Naive thymus-derived CD4-positive, alpha-beta T cell (primary cell): ENCODE measurements at regions of chr9 and their contacts with region 1.

Region 1: DNA sequence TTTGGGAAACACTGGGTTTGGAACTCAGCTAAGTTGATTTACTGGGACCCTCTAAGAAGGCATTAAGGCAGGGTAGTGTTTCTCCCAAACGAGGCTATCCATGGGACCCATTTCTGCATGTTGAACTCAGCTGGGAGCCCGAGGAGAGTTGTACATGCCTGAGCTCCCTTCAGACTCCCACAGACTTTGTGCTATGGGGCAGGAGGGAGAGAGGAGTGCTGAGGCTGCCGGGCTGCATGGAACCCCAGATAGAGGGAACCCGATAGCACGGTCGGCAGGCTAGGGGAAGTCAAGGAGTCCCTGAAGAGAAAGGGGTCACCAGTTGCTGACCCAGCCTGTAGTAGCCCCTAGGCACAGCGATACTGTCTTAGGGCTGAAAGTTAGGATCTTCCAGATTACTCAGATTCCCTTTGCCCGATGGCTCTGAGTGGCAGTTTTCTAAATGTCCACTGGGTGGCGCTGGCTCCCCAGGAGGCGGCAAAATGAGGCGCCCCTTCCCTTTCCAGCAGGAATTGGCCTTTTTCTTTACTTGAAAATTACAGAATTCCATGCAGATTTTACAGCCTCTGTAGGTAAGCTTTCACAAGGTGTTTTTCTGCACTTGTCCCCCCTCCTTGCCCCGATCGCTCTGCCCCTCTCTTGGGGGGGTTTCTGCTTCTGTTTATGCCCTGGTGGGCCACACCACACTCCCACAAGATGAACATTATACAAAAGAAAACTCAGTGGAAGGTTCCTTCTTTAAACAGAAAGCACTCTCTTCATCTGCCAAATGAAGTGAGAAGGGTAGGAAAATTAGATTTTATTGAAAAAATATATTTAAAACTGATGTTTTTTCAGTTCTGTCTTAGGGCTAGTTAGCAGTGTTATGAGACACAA is 17.8 kb downstream of the NANS start:
- DNase-seq: peak; percentile 46 to 78 (median 63)
- ATAC-seq: peak; percentile 47
- H3K4me3 ChIP-seq: no peak overlapping the region
- H3K4me3 Mint-ChIP-seq: peak overlapping the region; percentile 26 to 79 (median 64)
- H3K27ac ChIP-seq: peak overlapping the region; percentile 81
- H3K27ac Mint-ChIP-seq: peak overlapping the region; percentile 83 to 98 (median 94)
- H3K4me1 ChIP-seq: peaks cover 27 to 28% of the 10 kb centered on the region in 2 donors
- H3K4me1 Mint-ChIP-seq: peaks cover 0 to 55% (median 46%) of the 10 kb centered on the region in 7 donors
- H3K27me3 ChIP-seq: no peaks in the 10 kb centered on the region
- H3K27me3 Mint-ChIP-seq: no peaks in the 10 kb centered on the region

Region 2: DNA sequence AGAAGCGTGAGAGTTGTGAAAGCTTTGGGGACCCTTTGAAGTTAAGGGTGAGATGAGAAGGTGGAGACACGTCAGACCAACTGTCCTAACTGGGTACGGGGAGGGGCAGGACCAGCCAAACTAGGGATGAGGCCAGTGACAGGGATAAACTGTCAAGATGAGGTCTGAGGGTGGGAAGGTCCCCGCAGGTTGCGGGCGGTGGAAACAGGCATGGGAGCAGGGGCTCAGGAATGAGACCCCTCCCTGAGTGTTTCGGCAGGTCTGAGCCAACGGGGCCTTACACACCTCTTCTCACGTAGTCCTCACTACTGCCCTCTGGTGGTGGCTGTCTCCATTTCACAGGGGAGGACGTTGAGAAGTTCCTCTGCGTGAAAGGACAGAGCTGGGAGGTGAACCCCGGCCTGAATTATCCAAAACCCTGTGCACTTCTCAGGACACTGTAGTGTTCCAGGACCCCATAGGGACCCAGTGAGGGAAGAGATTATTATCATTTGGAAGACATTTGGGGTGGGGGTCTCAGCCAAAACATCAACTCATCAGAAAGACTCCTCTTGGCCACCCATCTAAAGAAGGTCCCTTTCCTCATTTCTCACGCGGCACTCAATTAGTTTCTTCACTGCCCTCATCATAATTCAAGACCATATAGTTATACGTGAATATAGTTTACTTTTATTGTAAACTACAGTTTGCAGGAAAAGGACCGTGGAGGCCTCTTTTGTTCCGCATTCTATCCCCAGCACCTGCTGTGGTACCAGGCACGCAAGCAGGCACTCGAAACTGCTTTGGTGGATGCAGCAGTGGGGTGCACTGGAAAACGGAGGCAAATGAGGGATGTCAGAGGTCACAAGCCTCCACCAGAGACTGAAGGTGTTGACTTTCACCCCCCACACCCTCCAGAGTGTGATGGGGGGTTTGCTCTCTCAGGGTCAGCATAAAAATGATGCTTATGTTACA is 39.5 kb before region 1 on chr9:
- CTCF ChIA-PET with region 1: no interaction called
- POLR2A ChIA-PET with region 1: no interaction called
- intact Hi-C with region 1: no loop called
- DNase-seq: peak; percentile 76 to 92 (median 86)
- ATAC-seq: peak; percentile 99
- H3K4me3 ChIP-seq: no peak overlapping the region
- H3K4me3 Mint-ChIP-seq: peak overlapping the region in 8 of 10 donors; percentile 11 to 63 (median 41)
- H3K27ac ChIP-seq: no peak overlapping the region
- H3K27ac Mint-ChIP-seq: peak overlapping the region in 8 of 9 donors; percentile 9 to 87 (median 66)
- H3K4me1 ChIP-seq: peaks cover 0 to 4% of the 10 kb centered on the region in 2 donors
- H3K4me1 Mint-ChIP-seq: peaks cover 5 to 12% (median 8%) of the 10 kb centered on the region in 7 donors
- H3K27me3 ChIP-seq: no peaks in the 10 kb centered on the region
- H3K27me3 Mint-ChIP-seq: peaks cover 0 to 8% (median 0%) of the 10 kb centered on the region in 5 donors

Region 3: GRCh38 chr9:98101868-98102273 is 27.5 kb after region 1 on chr9:
- CTCF ChIA-PET with region 1: interaction called, 9 read pairs
- POLR2A ChIA-PET with region 1: interaction called, 21 read pairs
- intact Hi-C with region 1: loop called (anchors 1 kb)
- DNase-seq: peak; percentile 35 to 96 (median 92)
- ATAC-seq: peak; percentile 99
- H3K4me3 ChIP-seq: peak overlapping the region; percentile 31
- H3K4me3 Mint-ChIP-seq: peak overlapping the region; percentile 66 to 86 (median 77)
- H3K27ac ChIP-seq: peak overlapping the region; percentile 78
- H3K27ac Mint-ChIP-seq: peak overlapping the region; percentile 87 to 99 (median 95)
- H3K4me1 ChIP-seq: peaks cover 88 to 91% of the 10 kb centered on the region in 2 donors
- H3K4me1 Mint-ChIP-seq: peaks cover 52 to 97% (median 88%) of the 10 kb centered on the region in 7 donors
- H3K27me3 ChIP-seq: no peaks in the 10 kb centered on the region
- H3K27me3 Mint-ChIP-seq: no peaks in the 10 kb centered on the region

Region 4: DNA sequence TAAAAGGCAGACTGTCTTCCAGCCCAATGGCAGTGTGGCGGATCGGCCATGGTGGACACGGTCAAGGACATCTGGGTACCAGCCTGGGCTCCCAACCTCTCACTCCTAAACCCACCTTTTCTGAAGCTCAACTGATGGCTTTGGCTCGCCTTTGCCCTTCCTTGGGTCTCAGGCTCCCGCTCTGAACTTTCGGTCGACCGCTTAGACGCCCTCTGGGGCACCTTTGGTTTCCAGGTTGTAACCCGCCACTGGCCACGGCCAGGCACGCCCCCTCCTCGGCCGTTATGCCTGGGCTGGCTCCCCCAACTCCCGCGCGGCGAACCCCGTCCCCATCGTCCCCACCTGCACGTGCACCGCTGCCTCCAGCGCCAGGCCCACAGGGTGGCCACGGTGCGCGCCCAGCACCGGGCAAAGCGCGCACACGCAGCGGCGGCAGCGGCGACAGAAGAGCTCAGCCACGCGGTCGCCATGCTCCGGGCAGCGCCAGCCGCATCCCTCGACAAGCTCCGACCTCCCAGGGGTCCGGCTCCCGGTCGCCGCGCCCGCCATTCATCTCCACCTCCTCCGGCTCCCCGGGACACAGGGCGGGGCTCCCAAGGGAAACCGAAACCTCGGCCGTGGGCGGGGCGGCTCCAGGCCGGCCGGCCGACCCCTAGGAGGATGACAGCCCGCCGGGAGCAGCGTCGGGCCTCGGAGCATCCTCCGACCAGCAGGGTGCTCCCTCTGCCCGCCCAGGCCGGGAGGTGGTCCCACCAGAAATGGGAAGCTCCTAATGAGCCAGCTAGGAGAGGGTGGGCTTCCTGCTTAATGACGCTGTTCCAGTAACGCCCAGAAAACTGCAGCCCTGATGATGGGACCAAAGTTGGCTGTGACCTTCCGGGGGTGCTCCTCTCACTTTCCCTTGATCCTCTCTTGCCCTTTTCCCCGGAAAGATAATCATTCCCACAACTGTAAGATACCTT is 44.6 kb after region 1 on chr9 and contains the start of gene TRIM14:
- CTCF ChIA-PET with region 1: interaction called, 6 read pairs
- POLR2A ChIA-PET with region 1: interaction called, 31 read pairs
- intact Hi-C with region 1: loop called (anchors 1 kb)
- DNase-seq: peak; percentile 23 to 79 (median 39)
- ATAC-seq: peak; percentile 64
- H3K4me3 ChIP-seq: peak within 1 kb of the TSS; percentile 78
- H3K4me3 Mint-ChIP-seq: peak within 1 kb of the TSS; percentile 81 to 100 (median 93)
- H3K27ac ChIP-seq: peak within 1 kb of the TSS; percentile 93
- H3K27ac Mint-ChIP-seq: peak within 1 kb of the TSS; percentile 95 to 100 (median 96)
- H3K4me1 ChIP-seq: peaks cover 26 to 39% of the 10 kb centered on the region in 2 donors
- H3K4me1 Mint-ChIP-seq: peaks cover 35 to 70% (median 58%) of the 10 kb centered on the region in 7 donors
- H3K27me3 ChIP-seq: no peaks in the 10 kb centered on the region
- H3K27me3 Mint-ChIP-seq: no peaks in the 10 kb centered on the region
- total RNA-seq, gene TRIM14: 54.1 to 114 (median 79.7) TPM

Region 5: GRCh38 chr9:98207606-98208005 is 133.3 kb after region 1 on chr9:
- CTCF ChIA-PET with region 1: interaction called, 5 read pairs
- POLR2A ChIA-PET with region 1: no interaction called
- intact Hi-C with region 1: loop called (anchors 1 to 2 kb)
- DNase-seq: no peak
- ATAC-seq: no peak
- H3K4me3 ChIP-seq: no peak overlapping the region
- H3K4me3 Mint-ChIP-seq: no peak overlapping the region
- H3K27ac ChIP-seq: no peak overlapping the region
- H3K27ac Mint-ChIP-seq: peak overlapping the region in 1 of 9 donors; percentile 28
- H3K4me1 ChIP-seq: no peaks in the 10 kb centered on the region
- H3K4me1 Mint-ChIP-seq: peaks cover 3 to 7% (median 6%) of the 10 kb centered on the region in 7 donors
- H3K27me3 ChIP-seq: no peaks in the 10 kb centered on the region
- H3K27me3 Mint-ChIP-seq: no peaks in the 10 kb centered on the region

Region 6: DNA sequence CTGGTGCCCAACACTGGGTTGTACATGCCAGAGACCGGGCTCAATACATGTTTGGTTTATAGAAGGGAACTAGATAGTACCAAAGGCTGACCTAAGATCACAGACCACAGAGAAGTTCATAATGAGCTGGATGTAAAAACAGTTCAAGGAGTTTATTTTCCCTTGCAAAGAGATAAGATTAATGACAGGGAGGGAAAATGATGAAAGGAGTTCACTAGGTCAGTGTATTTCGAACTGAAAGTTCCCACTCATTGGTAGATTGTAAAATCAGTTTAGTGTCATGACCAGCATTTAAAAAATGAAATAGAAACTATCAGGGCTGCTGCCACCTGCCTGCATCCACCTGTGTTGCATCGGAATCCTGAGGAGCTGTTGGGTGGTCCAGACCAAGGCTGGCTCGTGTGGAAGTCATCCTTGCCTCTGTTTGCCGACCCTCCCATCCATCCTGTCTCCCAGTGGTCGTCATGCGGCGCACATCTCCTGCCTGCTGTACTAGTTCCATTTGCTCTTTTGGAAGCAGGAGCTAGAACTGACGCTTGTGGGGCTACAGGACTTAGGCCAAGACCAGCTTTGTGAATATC is 160.0 kb after region 1 on chr9:
- CTCF ChIA-PET with region 1: interaction called, 3 read pairs
- POLR2A ChIA-PET with region 1: no interaction called
- intact Hi-C with region 1: loop called in 1 of 2 experiments (anchors 1 kb)
- DNase-seq: no peak
- ATAC-seq: no peak
- H3K4me3 ChIP-seq: no peak overlapping the region
- H3K4me3 Mint-ChIP-seq: no peak overlapping the region
- H3K27ac ChIP-seq: no peak overlapping the region
- H3K27ac Mint-ChIP-seq: no peak overlapping the region
- H3K4me1 ChIP-seq: no peaks in the 10 kb centered on the region
- H3K4me1 Mint-ChIP-seq: no peaks in the 10 kb centered on the region
- H3K27me3 ChIP-seq: no peaks in the 10 kb centered on the region
- H3K27me3 Mint-ChIP-seq: no peaks in the 10 kb centered on the region

Region 7: DNA sequence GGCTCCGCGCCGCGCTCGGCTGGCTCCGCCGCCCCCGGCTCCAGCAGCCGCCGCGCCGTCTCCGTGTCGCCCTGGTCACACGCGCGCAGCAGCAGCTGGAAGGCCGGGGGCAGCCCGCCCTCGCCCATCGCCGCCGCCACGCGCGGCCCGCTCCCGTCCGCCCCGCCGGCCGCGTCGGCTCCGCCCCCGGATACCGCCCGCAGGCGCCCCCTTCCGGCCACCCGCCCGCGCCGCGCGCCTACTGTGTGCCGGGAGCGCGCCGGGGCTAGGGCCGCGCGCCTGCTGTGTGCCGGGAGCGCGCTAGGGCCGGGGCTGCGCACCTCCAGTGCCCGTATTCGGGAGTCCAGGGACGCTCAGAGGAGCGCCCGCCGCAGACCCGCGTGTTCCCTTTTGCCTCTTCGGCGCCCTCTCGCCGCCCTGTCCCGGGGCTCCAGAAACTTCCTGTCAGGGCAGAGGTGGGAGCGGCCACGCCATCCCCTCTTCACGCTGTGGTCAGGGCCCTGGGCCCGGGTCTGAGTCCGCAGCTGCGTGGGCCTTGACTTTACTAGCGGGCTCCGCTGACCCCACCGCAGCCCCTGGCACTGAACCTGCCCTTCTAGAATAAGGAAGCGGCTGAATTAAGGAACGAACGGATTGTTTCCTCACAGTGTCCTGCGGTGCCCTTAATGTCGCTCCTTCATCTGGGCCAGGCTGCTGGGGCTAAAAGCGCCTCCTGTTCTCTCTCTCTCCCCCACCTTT is 722.2 kb after region 1 on chr9 and contains the start of gene ANKS6:
- CTCF ChIA-PET with region 1: no interaction called
- POLR2A ChIA-PET with region 1: no interaction called
- intact Hi-C with region 1: loop called in 1 of 2 experiments (anchors 10 kb)
- DNase-seq: peak; percentile 67 to 95 (median 84)
- ATAC-seq: peak; percentile 98
- H3K4me3 ChIP-seq: peak within 1 kb of the TSS; percentile 87
- H3K4me3 Mint-ChIP-seq: peak within 1 kb of the TSS; percentile 87 to 94 (median 90)
- H3K27ac ChIP-seq: peak within 1 kb of the TSS; percentile 74
- H3K27ac Mint-ChIP-seq: peak within 1 kb of the TSS; percentile 63 to 90 (median 87)
- H3K4me1 ChIP-seq: peaks cover 6 to 12% of the 10 kb centered on the region in 2 donors
- H3K4me1 Mint-ChIP-seq: peaks cover 21 to 37% (median 32%) of the 10 kb centered on the region in 7 donors
- H3K27me3 ChIP-seq: no peaks in the 10 kb centered on the region
- H3K27me3 Mint-ChIP-seq: peaks cover 0 to 23% (median 0%) of the 10 kb centered on the region in 5 donors
- total RNA-seq, gene ANKS6: 8.1 to 18.4 (median 13.5) TPM